Right cardiac atrium (tissue), 5 donors: ENCODE measurements at regions of chr16 and their contacts with region 1.

Region 1: DNA sequence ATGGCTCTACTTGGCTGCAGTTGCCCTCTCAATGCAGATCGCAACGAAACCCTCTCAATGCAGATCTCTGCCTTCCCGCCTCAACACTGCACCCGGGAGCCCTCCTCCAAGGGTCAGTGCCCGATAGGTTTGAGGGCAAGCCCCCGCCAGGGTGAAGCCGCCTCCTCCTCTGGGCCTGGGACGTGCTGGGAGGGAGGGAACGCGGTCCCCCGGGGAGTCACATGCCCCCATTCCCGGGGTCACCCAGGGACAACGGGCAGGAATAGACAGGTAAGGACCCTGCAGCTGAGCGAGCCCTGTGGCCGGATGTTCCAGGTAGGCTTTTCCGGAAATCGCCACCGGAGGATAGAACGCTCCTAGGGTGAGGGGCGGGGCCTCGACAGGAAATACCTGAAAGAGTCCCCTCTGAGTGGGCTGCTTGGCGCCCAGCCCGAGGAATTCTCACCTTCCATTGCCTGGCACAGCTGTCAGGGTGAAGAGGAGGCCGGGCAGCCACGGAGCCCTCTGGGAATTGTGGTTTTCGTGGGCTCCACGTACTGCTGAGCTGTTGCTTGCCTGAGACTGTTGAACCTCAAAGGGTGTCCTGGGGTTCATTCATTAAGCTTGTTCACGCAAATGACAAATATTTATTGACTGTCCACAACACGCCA is 12.8 kb downstream of the ZNF174 start:
- DNase-seq: no peak
- ATAC-seq: no peak
- H3K4me3 ChIP-seq: no peak overlapping the region
- H3K27ac ChIP-seq: no peak overlapping the region
- H3K4me1 ChIP-seq: no peaks in the 10 kb centered on the region
- H3K27me3 ChIP-seq: no peaks in the 10 kb centered on the region

Region 2: GRCh38 chr16:3377917-3378316 is 35.9 kb before region 1 on chr16:
- intact Hi-C with region 1: loop called in 1 of 4 experiments (anchors 5 kb)
- DNase-seq: no peak
- ATAC-seq: no peak
- H3K4me3 ChIP-seq: no peak overlapping the region
- H3K27ac ChIP-seq: no peak overlapping the region
- H3K4me1 ChIP-seq: no peaks in the 10 kb centered on the region
- H3K27me3 ChIP-seq: no peaks in the 10 kb centered on the region